ENCODE measurements at regions of chr3 and their contacts with region 1.

Region 1: GRCh38 chr3:171753665-171754408 is 56.4 kb downstream of the PLD1 start:
- DNase-seq: peak; percentile 57
- H3K4me3 Mint-ChIP-seq: no peak overlapping the region
- H3K27ac Mint-ChIP-seq: no peak overlapping the region
- H3K4me1 Mint-ChIP-seq: no peaks in the 10 kb centered on the region
- H3K27me3 Mint-ChIP-seq: no peaks in the 10 kb centered on the region
- CTCF ChIP-seq: no peak

Region 2: GRCh38 chr3:171383206-171384018 is 370.4 kb before region 1 on chr3:
- CTCF ChIA-PET with region 1: no interaction called
- POLR2A ChIA-PET with region 1: no interaction called
- intact Hi-C with region 1: no loop called
- DNase-seq: peak; percentile 14
- H3K4me3 Mint-ChIP-seq: no peak overlapping the region
- H3K27ac Mint-ChIP-seq: no peak overlapping the region
- H3K4me1 Mint-ChIP-seq: peaks cover 10% of the 10 kb centered on the region
- H3K27me3 Mint-ChIP-seq: no peaks in the 10 kb centered on the region
- CTCF ChIP-seq: no peak

Region 3: GRCh38 chr3:171591059-171591458 is 162.8 kb before region 1 on chr3:
- CTCF ChIA-PET with region 1: no interaction called
- POLR2A ChIA-PET with region 1: no interaction called
- intact Hi-C with region 1: no loop called
- DNase-seq: no peak
- H3K4me3 Mint-ChIP-seq: no peak overlapping the region
- H3K27ac Mint-ChIP-seq: no peak overlapping the region
- H3K4me1 Mint-ChIP-seq: no peaks in the 10 kb centered on the region
- H3K27me3 Mint-ChIP-seq: no peaks in the 10 kb centered on the region
- CTCF ChIP-seq: no peak

Region 4: GRCh38 chr3:171809821-171810628 is 56.2 kb after region 1 on chr3 and contains the start of gene PLD1:
- CTCF ChIA-PET with region 1: no interaction called
- POLR2A ChIA-PET with region 1: interaction called, 10 read pairs
- intact Hi-C with region 1: no loop called
- DNase-seq: peak; percentile 90
- H3K4me3 Mint-ChIP-seq: peak within 1 kb of the TSS; percentile 87
- H3K27ac Mint-ChIP-seq: peak within 1 kb of the TSS; percentile 98
- H3K4me1 Mint-ChIP-seq: peaks cover 38% of the 10 kb centered on the region
- H3K27me3 Mint-ChIP-seq: no peaks in the 10 kb centered on the region
- CTCF ChIP-seq: no peak
- total RNA-seq, gene PLD1: 8.0 and 14.8 TPM in 2 replicates

Region 5: GRCh38 chr3:172965256-172965655 is 1211.4 kb after region 1 on chr3:
- CTCF ChIA-PET with region 1: no interaction called
- POLR2A ChIA-PET with region 1: no interaction called
- intact Hi-C with region 1: no loop called
- DNase-seq: no peak
- H3K4me3 Mint-ChIP-seq: no peak overlapping the region
- H3K27ac Mint-ChIP-seq: no peak overlapping the region
- H3K4me1 Mint-ChIP-seq: no peaks in the 10 kb centered on the region
- H3K27me3 Mint-ChIP-seq: peaks cover 81% of the 10 kb centered on the region
- CTCF ChIP-seq: no peak

Measured in MCF 10A (cell line).